RWPE1 (cell line): ENCODE measurements at regions of chr19 and their contacts with region 1.

Region 1: DNA sequence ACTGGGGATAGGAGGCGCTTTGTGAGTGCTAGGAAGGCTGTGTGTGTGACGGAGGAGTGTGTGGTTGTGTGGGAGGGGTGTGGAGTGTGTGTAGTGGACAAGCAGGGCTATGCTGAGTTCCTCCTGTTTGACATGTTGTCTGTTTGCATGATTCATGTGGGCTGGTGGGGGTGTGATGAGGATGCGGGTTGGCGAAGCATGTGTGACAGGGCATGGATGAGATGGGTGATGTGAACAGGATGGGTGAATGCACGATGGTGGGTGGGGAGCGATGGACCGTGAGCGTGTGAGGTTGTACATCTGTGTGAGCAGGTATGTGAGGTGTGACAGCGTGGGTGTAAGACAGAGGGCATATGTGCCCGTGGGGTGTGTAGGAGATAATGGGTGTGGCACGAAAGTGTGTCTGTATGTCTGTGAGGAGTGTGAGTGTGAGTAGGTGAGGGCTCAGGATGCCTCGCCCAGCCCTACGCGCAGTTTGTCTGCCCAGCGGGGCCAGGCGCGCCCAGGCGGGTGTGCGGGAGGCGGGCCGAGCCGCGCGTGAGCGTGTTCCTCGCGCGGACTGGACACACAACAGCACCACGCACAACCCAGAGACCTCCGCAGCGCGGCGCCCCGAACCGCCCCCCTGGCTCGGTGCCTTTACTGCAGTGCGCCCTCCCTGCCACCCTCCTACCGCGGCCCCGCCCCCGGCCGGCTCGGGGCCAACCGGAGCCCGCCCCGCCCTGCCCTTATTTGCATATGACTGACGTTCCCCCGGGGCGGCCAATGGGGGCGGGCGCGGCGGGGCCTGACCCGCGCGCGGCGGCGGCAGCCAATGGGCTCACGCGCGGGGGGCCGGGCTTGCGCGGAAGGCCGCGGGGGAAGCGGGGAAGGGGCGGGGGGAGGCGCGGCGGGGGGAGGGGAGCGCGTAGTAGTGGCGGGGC is 14.4 kb downstream of the CIC start:
- DNase-seq: peak; percentile 96
- H3K27ac ChIP-seq: peak overlapping the region; percentile 100
- CTCF ChIP-seq: no peak

Region 2: GRCh38 chr19:42244347-42245220 is 38.8 kb before region 1 on chr19:
- CTCF ChIA-PET with region 1: interaction called, 15 read pairs
- POLR2A ChIA-PET with region 1: interaction called, 5 read pairs
- DNase-seq: peak; percentile 73
- H3K27ac ChIP-seq: peak overlapping the region; percentile 98
- CTCF ChIP-seq: peak; percentile 73

Region 3: GRCh38 chr19:42270346-42271044 is 12.9 kb before region 1 on chr19:
- CTCF ChIA-PET with region 1: interaction called, 13 read pairs
- POLR2A ChIA-PET with region 1: no interaction called
- DNase-seq: peak; percentile 59
- H3K27ac ChIP-seq: peak overlapping the region; percentile 100
- CTCF ChIP-seq: no peak

Region 4: GRCh38 chr19:44083866-44084265 is 1800.5 kb after region 1 on chr19:
- CTCF ChIA-PET with region 1: no interaction called
- POLR2A ChIA-PET with region 1: no interaction called
- DNase-seq: no peak
- H3K27ac ChIP-seq: no peak overlapping the region
- CTCF ChIP-seq: no peak